ENCODE measurements at regions of chr3 and their contacts with region 1.

Region 1: DNA sequence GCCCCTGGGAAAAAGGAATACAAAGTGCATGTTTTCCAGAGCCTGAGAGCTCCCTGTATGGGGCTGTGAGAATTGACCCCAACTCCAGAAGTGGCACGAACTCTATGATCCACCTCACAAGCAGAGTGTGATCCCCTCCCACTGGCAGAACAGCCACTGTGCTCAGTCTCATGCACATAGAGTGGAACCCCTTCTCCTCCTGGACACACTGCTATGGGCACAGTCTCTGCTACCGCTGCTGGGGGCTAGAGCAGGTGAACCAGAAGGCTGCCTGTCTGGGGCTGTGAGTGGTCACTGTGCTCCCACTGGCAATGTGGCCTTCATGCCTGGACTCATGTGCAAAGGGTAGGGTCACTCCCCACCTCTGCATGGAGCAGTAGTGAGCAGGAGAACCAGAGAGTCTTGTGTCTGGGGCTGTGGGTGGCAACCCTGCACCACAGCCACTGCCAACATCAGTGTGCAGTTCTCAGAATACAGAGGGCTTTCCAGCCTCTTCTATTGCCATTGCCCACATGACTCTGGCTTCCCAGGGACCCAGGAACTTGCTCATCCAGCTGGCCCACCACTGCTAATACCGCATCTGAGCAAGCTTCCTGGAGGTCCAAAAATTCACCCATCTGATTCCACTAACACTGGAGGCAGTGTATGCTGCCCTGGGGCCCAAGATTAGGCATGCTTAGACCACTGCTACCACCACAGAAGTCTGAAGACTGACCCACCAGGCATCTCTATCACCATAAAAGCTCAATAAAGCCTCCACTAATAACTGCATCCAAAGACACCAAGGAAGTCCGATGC is 343.7 kb upstream of the SOX14 start:
- DNase-seq: no peak
- ATAC-seq: no peak
- H3K4me3 Mint-ChIP-seq: no peak overlapping the region
- H3K27ac Mint-ChIP-seq: no peak overlapping the region
- H3K4me1 Mint-ChIP-seq: no peaks in the 10 kb centered on the region
- H3K27me3 Mint-ChIP-seq: no peaks in the 10 kb centered on the region
- CTCF ChIP-seq: no peak

Region 2: DNA sequence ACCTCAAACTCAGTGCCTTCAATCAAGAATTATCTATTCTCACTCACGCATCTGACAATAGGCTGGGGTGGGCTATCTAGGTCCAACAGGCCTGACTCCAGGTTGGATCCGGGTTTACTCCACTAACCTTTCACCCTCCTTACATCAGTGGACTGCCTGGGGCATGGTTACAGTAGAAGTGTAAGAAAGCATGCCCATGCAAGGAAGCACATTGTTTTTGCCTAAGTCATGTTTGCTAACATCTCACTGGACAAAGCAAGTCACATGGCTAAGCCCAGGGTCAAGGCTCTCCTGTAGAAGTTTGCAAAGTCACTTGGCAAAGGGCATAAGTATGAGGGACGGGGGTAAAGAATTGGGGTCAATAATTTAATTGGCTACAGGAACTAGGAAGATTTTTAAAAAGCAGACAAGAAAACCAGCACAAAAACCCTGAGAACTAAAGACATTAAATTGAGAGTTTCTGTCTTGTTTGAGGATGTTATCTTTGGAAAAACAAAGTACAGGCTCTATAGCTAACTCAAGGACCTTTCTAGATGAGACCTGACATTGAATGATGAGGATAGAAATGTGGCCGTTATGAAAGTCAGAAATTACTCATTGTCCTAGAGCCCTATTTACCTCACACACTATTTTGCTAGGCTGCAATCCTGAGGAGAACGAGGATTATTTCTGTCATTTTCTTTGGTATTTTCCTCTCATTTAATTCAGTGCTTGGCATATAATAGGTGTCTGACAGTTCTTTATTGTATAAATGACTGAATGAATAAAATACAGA is 248.4 kb before region 1 on chr3:
- CTCF ChIA-PET with region 1: no interaction called
- POLR2A ChIA-PET with region 1: no interaction called
- intact Hi-C with region 1: loop called (anchors 5 kb)
- DNase-seq: no peak
- ATAC-seq: no peak
- H3K4me3 Mint-ChIP-seq: no peak overlapping the region
- H3K27ac Mint-ChIP-seq: no peak overlapping the region
- H3K4me1 Mint-ChIP-seq: no peaks in the 10 kb centered on the region
- H3K27me3 Mint-ChIP-seq: peaks cover 14% of the 10 kb centered on the region
- CTCF ChIP-seq: no peak

Region 3: DNA sequence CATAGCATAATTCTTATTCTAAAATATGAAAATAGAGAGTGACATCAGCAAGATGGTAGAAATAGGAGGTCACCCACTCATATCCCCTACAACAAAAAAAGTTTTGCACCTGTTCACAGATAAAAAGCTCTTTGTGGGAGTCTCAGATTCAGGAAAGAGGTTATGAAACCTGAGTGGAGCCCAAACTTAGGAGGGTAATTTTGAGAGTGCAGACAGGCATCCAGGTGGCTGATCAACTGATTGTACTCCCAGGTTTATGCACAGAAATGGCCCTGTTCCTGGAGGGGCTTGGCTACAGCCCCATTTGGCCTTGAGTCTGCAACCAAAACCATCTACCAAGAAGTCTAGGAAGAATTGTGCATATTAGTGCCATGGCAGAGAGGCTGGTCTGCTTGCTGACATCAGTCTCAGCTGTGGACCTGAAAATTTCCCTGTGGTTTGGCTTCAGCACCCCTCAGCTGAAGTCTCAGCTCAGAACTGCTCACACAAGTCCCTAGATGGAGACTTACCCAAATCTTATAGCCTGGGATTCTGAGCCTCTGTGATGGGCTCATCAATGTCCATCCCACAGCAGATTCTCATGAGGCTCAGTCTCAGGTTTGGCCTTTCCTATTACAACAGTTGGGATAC is 171.0 kb before region 1 on chr3:
- CTCF ChIA-PET with region 1: no interaction called
- POLR2A ChIA-PET with region 1: no interaction called
- intact Hi-C with region 1: no loop called
- DNase-seq: no peak
- ATAC-seq: no peak
- H3K4me3 Mint-ChIP-seq: no peak overlapping the region
- H3K27ac Mint-ChIP-seq: no peak overlapping the region
- H3K4me1 Mint-ChIP-seq: no peaks in the 10 kb centered on the region
- H3K27me3 Mint-ChIP-seq: no peaks in the 10 kb centered on the region
- CTCF ChIP-seq: no peak

Region 4: GRCh38 chr3:137409584-137409983 is 10.8 kb before region 1 on chr3:
- CTCF ChIA-PET with region 1: no interaction called
- POLR2A ChIA-PET with region 1: no interaction called
- intact Hi-C with region 1: no loop called
- DNase-seq: no peak
- ATAC-seq: no peak
- H3K4me3 Mint-ChIP-seq: no peak overlapping the region
- H3K27ac Mint-ChIP-seq: no peak overlapping the region
- H3K4me1 Mint-ChIP-seq: no peaks in the 10 kb centered on the region
- H3K27me3 Mint-ChIP-seq: no peaks in the 10 kb centered on the region
- CTCF ChIP-seq: no peak

Region 5: GRCh38 chr3:137474932-137475331 is 54.5 kb after region 1 on chr3:
- CTCF ChIA-PET with region 1: no interaction called
- POLR2A ChIA-PET with region 1: no interaction called
- intact Hi-C with region 1: no loop called
- DNase-seq: no peak
- ATAC-seq: no peak
- H3K4me3 Mint-ChIP-seq: no peak overlapping the region
- H3K27ac Mint-ChIP-seq: no peak overlapping the region
- H3K4me1 Mint-ChIP-seq: no peaks in the 10 kb centered on the region
- H3K27me3 Mint-ChIP-seq: no peaks in the 10 kb centered on the region
- CTCF ChIP-seq: no peak

Region 6: DNA sequence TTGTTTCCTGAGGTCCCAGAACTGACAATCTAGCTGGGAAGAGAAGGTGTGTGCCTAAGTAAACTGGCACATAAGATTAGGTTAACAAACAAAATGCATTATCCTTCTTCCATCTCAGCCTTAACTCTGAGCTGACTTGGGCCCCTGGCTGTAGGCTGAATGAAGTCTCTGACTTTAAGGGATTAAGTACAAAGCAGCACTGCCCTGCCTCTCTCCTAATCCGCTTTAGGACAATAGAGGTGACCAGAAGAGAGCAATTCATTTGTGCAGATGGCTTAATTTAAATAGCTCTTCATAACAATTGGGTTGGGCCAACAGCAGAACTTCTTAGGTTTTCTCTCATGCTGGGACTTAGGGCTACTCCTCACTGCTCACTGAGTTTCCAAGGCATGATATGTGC is 162.1 kb after region 1 on chr3:
- CTCF ChIA-PET with region 1: no interaction called
- POLR2A ChIA-PET with region 1: no interaction called
- intact Hi-C with region 1: no loop called
- DNase-seq: no peak
- ATAC-seq: no peak
- H3K4me3 Mint-ChIP-seq: no peak overlapping the region
- H3K27ac Mint-ChIP-seq: no peak overlapping the region
- H3K4me1 Mint-ChIP-seq: no peaks in the 10 kb centered on the region
- H3K27me3 Mint-ChIP-seq: no peaks in the 10 kb centered on the region
- CTCF ChIP-seq: no peak

Measured in activated CD8-positive, alpha-beta T cell treated with anti-CD3 and anti-CD28 coated beads for 36 hours (primary cell).